HEK293 (cell line): ENCODE measurements at regions of chr11 and their contacts with region 1.

Region 1: DNA sequence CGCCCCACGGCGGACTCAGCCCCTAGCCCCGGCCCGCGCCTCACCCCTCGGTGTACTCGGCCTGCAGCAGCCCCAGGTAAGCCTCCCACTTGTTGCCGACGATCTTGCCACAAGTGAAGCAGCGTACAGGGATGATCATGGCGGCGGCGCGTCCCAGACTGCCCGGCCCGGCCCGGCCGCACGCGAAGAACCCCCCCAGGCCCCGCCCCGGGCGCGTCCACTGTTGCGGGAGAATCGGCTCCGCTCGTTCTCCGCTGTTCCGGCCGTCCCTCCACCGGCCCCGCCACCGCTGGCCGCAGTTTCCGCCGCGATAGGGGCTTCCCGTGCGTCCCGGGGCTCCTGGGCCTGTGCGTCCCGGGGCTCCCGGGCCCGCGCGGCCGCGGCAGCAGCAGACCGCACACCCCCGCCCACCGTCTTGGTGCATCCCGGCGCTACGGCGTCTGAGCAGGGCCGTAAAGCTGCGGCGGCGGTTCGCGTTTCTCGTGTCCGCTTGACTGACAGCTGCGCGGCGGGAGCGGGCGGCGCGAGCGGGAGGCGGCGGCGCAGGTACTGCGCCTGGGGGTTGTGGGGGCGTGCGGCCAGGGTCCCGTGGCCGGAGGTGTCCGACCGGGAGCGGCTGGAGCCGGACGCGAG is at the starts of genes POLR2L and TSPAN4:
- H3K4me3 ChIP-seq: peak within 1 kb of the TSS; percentile 89
- H3K27ac ChIP-seq: peak within 1 kb of the TSS; percentile 93
- H3K4me1 ChIP-seq: 0 out of 2 replicates have a peak, but pooled peaks cover 4% of the 10 kb centered on the region
- CTCF ChIP-seq: no peak

Region 2: DNA sequence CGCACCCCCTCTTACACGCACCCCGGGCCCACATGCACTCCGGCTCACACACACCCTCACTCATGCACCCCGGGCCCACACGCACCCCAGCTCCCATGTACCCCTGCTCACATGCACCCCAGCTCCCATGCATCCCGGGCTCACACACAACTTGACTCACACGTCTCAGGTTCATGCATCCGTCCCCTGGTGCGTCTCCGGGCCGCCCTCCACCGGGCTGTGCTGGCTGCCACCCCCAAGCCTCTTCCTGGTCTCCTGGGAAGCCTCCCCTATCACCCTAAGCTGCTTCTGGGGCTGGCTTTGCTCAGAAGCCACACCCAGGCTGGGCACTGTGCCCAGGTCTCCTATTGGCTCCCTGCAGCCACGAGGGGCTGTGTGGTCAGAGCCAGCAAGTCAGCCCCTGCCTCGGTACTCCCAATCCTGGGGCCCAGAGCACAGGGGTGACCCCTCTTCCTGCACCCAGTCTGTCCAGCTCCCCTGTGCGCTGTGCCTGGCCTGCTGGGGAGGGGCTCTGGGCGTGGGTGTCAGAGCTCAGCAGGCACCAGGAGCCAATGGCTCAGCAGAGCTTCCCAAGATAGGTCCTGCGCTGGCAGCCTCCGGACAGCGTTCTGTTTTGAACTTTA is 17.1 kb after region 1 on chr11:
- CTCF ChIA-PET with region 1: interaction called, 5 read pairs
- POLR2A ChIA-PET with region 1: interaction called, 11 read pairs
- H3K4me3 ChIP-seq: no peak overlapping the region
- H3K27ac ChIP-seq: no peak overlapping the region; the same call in 1 of the 2 replicates
- H3K4me1 ChIP-seq: no peaks in the 10 kb centered on the region
- CTCF ChIP-seq: 0 out of 2 replicates have a peak, but pooled peaks have one; percentile 8